Pancreas (tissue), 10 donors: ENCODE measurements at regions of chr19 and their contacts with region 1.

Region 1: GRCh38 chr19:16764793-16765433 is 45.3 kb downstream of the NWD1 start:
- DNase-seq: no peak
- ATAC-seq: no peak
- H3K4me3 ChIP-seq: no peak overlapping the region
- H3K27ac ChIP-seq: no peak overlapping the region
- H3K4me1 ChIP-seq: no peaks in the 10 kb centered on the region
- H3K27me3 ChIP-seq: no peaks in the 10 kb centered on the region
- CTCF ChIP-seq: no peak

Region 2: DNA sequence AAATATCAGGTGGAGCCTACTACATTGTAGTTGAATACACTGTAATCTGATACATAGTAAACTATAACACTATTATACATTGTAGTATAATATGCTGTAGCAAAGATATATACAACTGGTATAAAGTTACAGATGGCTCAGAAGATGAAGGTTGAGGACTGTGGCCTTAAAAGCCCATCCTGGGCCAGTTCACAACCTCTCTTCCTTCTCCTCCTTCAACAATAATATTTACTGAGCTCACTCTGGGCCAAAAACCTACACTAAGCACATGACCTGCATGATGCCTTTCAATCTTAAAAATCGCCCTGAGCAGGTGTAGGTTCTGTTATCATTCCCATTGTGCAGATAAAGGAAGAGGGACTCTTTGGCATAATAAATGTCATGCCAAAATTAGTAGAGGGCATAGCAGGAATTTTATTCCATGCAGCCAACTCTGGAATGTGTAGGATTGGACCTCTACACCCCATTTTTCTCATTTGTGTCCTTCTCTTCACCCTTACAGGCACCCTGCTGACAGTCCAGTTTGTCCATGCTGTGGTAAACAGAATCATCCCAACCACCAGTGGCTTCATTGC is 49.7 kb after region 1 on chr19:
- intact Hi-C with region 1: no loop called
- DNase-seq: no peak
- ATAC-seq: no peak
- H3K4me3 ChIP-seq: no peak overlapping the region
- H3K27ac ChIP-seq: no peak overlapping the region
- H3K4me1 ChIP-seq: no peaks in the 10 kb centered on the region
- H3K27me3 ChIP-seq: no peaks in the 10 kb centered on the region
- CTCF ChIP-seq: no peak

Region 3: GRCh38 chr19:16944626-16945363 is 179.9 kb after region 1 on chr19:
- intact Hi-C with region 1: no loop called
- DNase-seq: no peak
- ATAC-seq: no peak
- H3K4me3 ChIP-seq: no peak overlapping the region
- H3K27ac ChIP-seq: no peak overlapping the region
- H3K4me1 ChIP-seq: no peaks in the 10 kb centered on the region
- H3K27me3 ChIP-seq: no peaks in the 10 kb centered on the region
- CTCF ChIP-seq: no peak

Region 4: DNA sequence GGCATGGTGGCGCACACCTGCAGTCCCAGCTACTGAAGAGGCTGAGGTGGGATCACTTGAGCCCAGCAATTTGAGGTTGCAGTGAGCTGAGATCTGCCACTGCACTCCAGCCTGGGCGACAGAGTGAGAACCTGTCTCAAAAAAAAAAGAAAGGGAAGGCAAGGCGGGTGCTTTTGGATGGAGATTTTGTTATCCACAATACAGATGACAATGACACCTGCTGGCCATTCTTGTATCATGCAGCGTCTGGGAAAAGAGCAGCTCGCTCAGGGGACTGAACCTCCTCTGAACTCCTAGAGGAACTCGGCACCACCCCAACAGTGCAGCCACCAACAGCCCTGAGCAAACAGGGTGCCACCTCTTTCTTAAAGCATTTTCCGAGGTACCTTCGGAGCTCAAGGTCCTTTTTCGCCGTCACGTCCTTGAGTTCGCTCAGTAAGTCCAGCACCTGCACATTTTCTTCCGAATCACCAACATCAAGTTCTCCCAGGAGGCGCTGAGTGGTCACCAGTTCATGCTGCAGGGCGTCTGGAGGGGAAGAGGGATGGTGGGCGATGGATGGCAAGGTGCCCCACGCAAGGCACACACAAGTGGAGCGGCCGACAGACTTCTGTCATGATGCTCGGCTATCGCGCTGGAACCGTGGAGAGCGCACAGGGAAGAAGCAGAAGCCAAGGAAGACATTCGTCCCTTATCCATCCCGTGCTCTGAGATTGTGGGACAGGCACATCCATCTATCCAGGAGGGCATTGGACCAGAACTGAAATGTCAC is 287.7 kb after region 1 on chr19:
- intact Hi-C with region 1: loop called in 1 of 3 experiments (anchors 5 kb)
- DNase-seq: peak in 1 of 6 donors; percentile 34
- ATAC-seq: peak in 3 of 4 donors; percentile 72 to 74 (median 74)
- H3K4me3 ChIP-seq: no peak overlapping the region
- H3K27ac ChIP-seq: no peak overlapping the region
- H3K4me1 ChIP-seq: no peaks in the 10 kb centered on the region
- H3K27me3 ChIP-seq: no peaks in the 10 kb centered on the region
- CTCF ChIP-seq: peak; percentile 26 to 40 (median 35)

Region 5: GRCh38 chr19:17275461-17276175 is 510.7 kb after region 1 on chr19:
- intact Hi-C with region 1: loop called in 1 of 3 experiments (anchors 10 kb)
- DNase-seq: no peak
- ATAC-seq: no peak
- H3K4me3 ChIP-seq: no peak overlapping the region
- H3K27ac ChIP-seq: no peak overlapping the region
- H3K4me1 ChIP-seq: no peaks in the 10 kb centered on the region
- H3K27me3 ChIP-seq: no peaks in the 10 kb centered on the region
- CTCF ChIP-seq: no peak